Ovary (tissue), 10 donors: ENCODE measurements at regions of chr9 and their contacts with region 1.

Region 1: DNA sequence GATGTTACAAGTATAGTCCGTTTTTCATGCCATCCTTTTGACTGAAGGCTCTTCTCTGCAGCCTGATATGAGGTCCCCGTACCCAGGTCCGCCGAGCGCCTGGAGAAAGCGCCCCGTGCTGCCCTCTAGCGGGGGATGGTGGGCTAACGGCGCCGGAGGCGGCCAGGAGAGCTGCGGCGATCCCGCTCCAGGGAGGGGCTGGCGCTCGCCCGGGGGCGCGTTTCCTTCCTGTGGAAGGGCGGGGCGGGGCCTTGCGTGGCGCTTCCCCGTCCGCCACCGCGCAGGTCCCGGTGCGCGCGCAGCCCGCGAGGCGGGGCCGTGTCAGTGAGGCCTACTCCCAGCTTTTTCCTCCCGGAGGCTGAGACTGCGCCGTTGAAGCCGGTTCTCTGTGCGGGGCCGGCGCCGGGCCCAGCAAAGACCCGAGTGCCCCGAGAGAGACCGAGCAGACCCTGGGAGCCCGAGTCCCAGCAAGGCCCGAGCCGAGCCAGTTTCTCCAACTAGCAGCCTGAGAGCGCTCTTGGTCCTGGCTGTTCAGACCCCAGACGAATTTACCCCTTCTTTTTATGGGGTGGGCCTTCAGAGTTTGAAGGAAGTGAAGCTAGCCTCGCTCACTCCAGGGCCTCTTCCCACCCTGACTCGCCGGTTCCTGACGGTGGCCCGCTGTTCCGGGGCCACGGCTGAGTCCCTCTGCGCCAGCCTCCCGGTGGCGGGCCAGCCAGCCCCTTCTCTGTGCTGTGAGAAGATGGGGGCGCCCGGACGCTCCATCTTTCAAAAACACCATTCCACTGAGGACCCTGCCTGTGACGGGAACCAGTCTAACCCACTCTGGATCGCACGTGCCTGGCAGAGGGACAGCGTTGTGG is 9.7 kb upstream of the PHF2 start:
- DNase-seq: peak; percentile 98 to 99 (median 99)
- H3K4me3 ChIP-seq: peak overlapping the region; percentile 73
- H3K27ac ChIP-seq: peak overlapping the region; percentile 62 to 90
- H3K4me1 ChIP-seq: peaks cover 7% of the 10 kb centered on the region
- H3K27me3 ChIP-seq: no peaks in the 10 kb centered on the region
- CTCF ChIP-seq: peak; percentile 91 to 95 (median 93)
- EP300 ChIP-seq: no peak
- POLR2A ChIP-seq: peak; percentile 90

Region 2: DNA sequence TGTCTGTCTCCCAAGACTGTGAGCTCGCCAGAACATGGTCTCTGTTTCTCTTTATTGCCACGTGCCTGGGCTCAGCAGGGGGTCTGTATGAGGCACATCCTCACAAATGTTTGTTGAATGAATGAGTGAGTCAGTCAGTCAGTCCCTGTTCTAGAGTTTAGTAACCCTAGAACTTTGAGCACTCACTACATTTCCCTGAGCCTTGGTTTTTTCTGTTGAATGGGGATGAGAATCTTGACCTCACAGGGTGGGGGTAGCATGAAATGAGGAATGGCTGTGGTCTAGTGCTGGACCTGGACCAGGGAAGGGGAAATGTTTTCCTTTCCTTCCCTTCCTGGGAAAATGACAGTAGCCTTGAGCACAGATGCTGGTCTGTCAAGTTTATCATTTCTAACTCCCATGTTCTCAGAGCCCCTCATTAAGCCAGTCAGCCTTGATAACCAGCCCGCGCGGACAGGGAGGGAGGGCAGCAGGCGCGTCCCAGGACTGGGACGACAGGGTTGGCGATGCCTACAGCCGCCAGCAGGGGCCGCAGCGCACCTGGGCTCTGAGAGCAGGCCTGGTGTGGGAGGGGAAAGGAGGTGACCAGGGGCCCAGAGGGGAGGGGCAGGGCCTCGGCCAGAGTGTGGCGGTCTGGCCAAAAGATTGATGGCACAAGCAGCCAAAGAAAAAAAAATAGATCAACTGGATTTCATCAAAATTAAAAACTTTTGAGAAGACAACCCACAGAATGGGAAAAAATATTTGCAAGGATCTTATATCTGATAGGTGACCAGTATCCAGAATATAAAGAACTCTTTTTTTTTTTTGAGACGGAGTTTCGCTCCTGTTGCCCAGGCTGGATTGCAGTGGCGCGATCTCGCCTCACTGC is 406.8 kb before region 1 on chr9:
- intact Hi-C with region 1: loop called in 1 of 4 experiments (anchors 10 kb)
- DNase-seq: peak; percentile 72 to 88 (median 85)
- H3K4me3 ChIP-seq: no peak overlapping the region
- H3K27ac ChIP-seq: no peak overlapping the region
- H3K4me1 ChIP-seq: peaks cover 7% of the 10 kb centered on the region
- H3K27me3 ChIP-seq: no peaks in the 10 kb centered on the region
- CTCF ChIP-seq: peak; percentile 74 to 89 (median 88)
- EP300 ChIP-seq: no peak
- POLR2A ChIP-seq: no peak